ENCODE measurements at regions of chr5 and their contacts with region 1.

Region 1: DNA sequence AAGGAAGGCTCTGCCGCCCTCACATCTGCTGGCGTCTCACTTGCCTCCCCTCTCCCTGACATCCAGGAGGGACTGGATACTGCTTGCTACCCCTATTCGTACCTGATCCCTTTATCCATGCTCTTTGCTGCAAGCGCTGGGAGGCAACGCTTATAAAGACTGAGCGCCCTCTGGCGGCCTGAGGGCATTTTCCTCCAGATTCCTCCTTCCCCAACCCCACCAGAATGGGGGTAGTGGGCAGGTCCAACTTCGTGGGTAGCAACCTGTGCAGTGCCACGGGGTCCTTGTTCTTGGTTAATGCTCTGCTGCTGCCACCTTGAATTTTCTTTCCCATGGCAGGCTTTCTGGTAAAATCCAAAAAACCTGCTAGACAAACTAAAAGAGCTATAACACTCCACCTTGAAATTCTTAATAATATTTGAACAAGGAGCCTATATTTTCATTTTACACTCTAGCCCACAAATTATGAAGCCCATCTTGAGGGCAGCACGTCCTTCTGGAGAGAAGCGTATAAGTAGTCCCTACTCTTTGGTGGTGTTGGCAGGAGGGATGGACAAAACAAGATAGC is 52.4 kb downstream of the JADE2 start:
- DNase-seq: peak; percentile 84
- ATAC-seq: peak; percentile 71
- H3K4me3 ChIP-seq: no peak overlapping the region
- H3K4me3 Mint-ChIP-seq: no peak overlapping the region
- H3K27ac ChIP-seq: peak overlapping the region in 1 of 2 donors; percentile 4
- H3K27ac Mint-ChIP-seq: peak overlapping the region; percentile 60
- H3K4me1 ChIP-seq: no peaks in the 10 kb centered on the region
- H3K4me1 Mint-ChIP-seq: peaks cover 4% of the 10 kb centered on the region
- H3K27me3 ChIP-seq: no peaks in the 10 kb centered on the region
- H3K27me3 Mint-ChIP-seq: no peaks in the 10 kb centered on the region
- CTCF ChIP-seq: peak; percentile 86

Region 2: DNA sequence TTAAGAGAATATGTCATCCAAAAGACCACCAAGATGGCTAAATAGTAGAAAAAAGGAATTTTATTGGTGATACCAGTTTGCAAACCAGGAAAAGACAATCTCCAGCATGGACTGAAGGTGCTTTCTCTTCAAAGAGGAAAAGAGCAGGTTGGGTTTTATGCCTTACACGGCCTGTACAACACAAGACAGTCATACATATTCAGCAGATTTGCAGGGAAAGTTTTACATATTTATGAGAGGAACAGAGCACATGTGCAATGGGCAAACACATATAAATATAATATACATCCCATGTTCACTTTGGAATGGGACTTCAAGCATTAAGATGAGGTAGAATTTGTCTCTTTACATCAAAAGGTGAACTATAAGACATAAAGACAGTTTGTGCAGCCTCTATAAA is 281.7 kb before region 1 on chr5:
- CTCF ChIA-PET with region 1: interaction called, 10 read pairs
- POLR2A ChIA-PET with region 1: no interaction called
- intact Hi-C with region 1: no loop called
- DNase-seq: no peak
- ATAC-seq: no peak
- H3K4me3 ChIP-seq: no peak overlapping the region
- H3K4me3 Mint-ChIP-seq: no peak overlapping the region
- H3K27ac ChIP-seq: no peak overlapping the region
- H3K27ac Mint-ChIP-seq: no peak overlapping the region
- H3K4me1 ChIP-seq: no peaks in the 10 kb centered on the region
- H3K4me1 Mint-ChIP-seq: no peaks in the 10 kb centered on the region
- H3K27me3 ChIP-seq: no peaks in the 10 kb centered on the region
- H3K27me3 Mint-ChIP-seq: peaks cover 2% of the 10 kb centered on the region
- CTCF ChIP-seq: no peak

Region 3: GRCh38 chr5:134392301-134392700 is 185.6 kb before region 1 on chr5:
- CTCF ChIA-PET with region 1: interaction called, 10 read pairs
- POLR2A ChIA-PET with region 1: no interaction called
- intact Hi-C with region 1: no loop called
- DNase-seq: no peak
- ATAC-seq: no peak
- H3K4me3 ChIP-seq: no peak overlapping the region
- H3K4me3 Mint-ChIP-seq: no peak overlapping the region
- H3K27ac ChIP-seq: no peak overlapping the region
- H3K27ac Mint-ChIP-seq: no peak overlapping the region
- H3K4me1 ChIP-seq: no peaks in the 10 kb centered on the region
- H3K4me1 Mint-ChIP-seq: no peaks in the 10 kb centered on the region
- H3K27me3 ChIP-seq: no peaks in the 10 kb centered on the region
- H3K27me3 Mint-ChIP-seq: no peaks in the 10 kb centered on the region
- CTCF ChIP-seq: no peak

Region 4: GRCh38 chr5:134465816-134466240 is 112.1 kb before region 1 on chr5:
- CTCF ChIA-PET with region 1: interaction called, 8 read pairs
- POLR2A ChIA-PET with region 1: no interaction called
- intact Hi-C with region 1: loop called (anchors 5 kb)
- DNase-seq: peak; percentile 65
- ATAC-seq: peak; percentile 82
- H3K4me3 ChIP-seq: peak overlapping the region; percentile 56 to 76 (median 58)
- H3K4me3 Mint-ChIP-seq: peak overlapping the region; percentile 89
- H3K27ac ChIP-seq: peak overlapping the region in 1 of 2 donors; percentile 42
- H3K27ac Mint-ChIP-seq: peak overlapping the region; percentile 87
- H3K4me1 ChIP-seq: peaks cover 26 to 36% of the 10 kb centered on the region in 2 donors
- H3K4me1 Mint-ChIP-seq: peaks cover 41% of the 10 kb centered on the region
- H3K27me3 ChIP-seq: no peaks in the 10 kb centered on the region
- H3K27me3 Mint-ChIP-seq: no peaks in the 10 kb centered on the region
- CTCF ChIP-seq: no peak

Region 5: GRCh38 chr5:134541736-134542376 is 36.0 kb before region 1 on chr5:
- CTCF ChIA-PET with region 1: interaction called, 14 read pairs
- POLR2A ChIA-PET with region 1: no interaction called
- intact Hi-C with region 1: loop called (anchors 1 kb)
- DNase-seq: no peak
- ATAC-seq: no peak
- H3K4me3 ChIP-seq: no peak overlapping the region
- H3K4me3 Mint-ChIP-seq: peak overlapping the region; percentile 78
- H3K27ac ChIP-seq: peak overlapping the region; percentile 87 to 95
- H3K27ac Mint-ChIP-seq: peak overlapping the region; percentile 91
- H3K4me1 ChIP-seq: peaks cover 74 to 75% of the 10 kb centered on the region in 2 donors
- H3K4me1 Mint-ChIP-seq: peaks cover 70% of the 10 kb centered on the region
- H3K27me3 ChIP-seq: no peaks in the 10 kb centered on the region
- H3K27me3 Mint-ChIP-seq: no peaks in the 10 kb centered on the region
- CTCF ChIP-seq: no peak

Region 6: GRCh38 chr5:135053278-135053677 is 475.4 kb after region 1 on chr5:
- CTCF ChIA-PET with region 1: no interaction called
- POLR2A ChIA-PET with region 1: no interaction called
- intact Hi-C with region 1: no loop called
- DNase-seq: peak; percentile 92
- ATAC-seq: peak; percentile 89
- H3K4me3 ChIP-seq: peak overlapping the region in 3 of 5 experiments; percentile 9 to 48 (median 27)
- H3K4me3 Mint-ChIP-seq: peak overlapping the region; percentile 85
- H3K27ac ChIP-seq: peak overlapping the region; percentile 29 to 50
- H3K27ac Mint-ChIP-seq: peak overlapping the region; percentile 74
- H3K4me1 ChIP-seq: peaks cover 48 to 55% of the 10 kb centered on the region in 2 donors
- H3K4me1 Mint-ChIP-seq: peaks cover 57% of the 10 kb centered on the region
- H3K27me3 ChIP-seq: peaks cover 0 to 53% (median 29%) of the 10 kb centered on the region in 4 experiments
- H3K27me3 Mint-ChIP-seq: peaks cover 53% of the 10 kb centered on the region
- CTCF ChIP-seq: no peak

Region 7: GRCh38 chr5:135230251-135230925 is 652.5 kb after region 1 on chr5:
- CTCF ChIA-PET with region 1: no interaction called
- POLR2A ChIA-PET with region 1: no interaction called
- intact Hi-C with region 1: no loop called
- DNase-seq: no peak
- ATAC-seq: no peak
- H3K4me3 ChIP-seq: no peak overlapping the region
- H3K4me3 Mint-ChIP-seq: no peak overlapping the region
- H3K27ac ChIP-seq: no peak overlapping the region
- H3K27ac Mint-ChIP-seq: no peak overlapping the region
- H3K4me1 ChIP-seq: no peaks in the 10 kb centered on the region
- H3K4me1 Mint-ChIP-seq: no peaks in the 10 kb centered on the region
- H3K27me3 ChIP-seq: peaks cover 0 to 4% (median 0%) of the 10 kb centered on the region in 4 experiments
- H3K27me3 Mint-ChIP-seq: peaks cover 20% of the 10 kb centered on the region
- CTCF ChIP-seq: no peak

Measured in B cell (primary cell).